Activated CD4-positive, alpha-beta T cell treated with anti-CD3 and anti-CD28 coated beads for 36 hours (primary cell): ENCODE measurements at regions of chr3 and their contacts with region 1.

Region 1: DNA sequence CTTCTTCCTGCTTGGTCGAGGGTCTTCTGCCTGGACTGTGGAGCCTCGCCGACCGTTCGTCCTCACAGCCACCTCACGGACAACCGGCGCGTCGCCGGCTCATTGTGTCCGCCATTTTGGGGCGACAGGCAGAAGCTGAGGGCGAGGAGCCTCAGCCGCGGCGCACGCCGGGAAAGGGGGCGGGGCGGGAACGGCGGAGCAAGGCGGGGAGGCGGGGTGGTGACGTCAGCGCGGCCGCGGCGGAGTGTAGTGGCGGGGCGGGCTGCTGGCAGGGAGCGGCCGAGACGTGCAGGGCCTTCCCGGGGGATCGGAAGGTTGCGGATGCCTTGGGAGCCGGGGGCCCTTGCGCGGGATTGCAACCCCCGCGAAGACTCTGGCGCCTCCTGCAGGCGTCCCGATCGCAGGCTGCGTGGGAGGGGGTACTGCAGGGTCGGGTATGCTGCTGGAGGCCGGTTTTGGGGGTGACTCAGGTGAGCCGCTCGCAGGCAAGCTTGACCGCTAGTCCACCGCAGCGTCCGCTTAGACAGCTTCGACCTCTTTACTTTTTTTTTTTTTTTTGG is at the start of gene WDR82:
- DNase-seq: peak; percentile 100
- ATAC-seq: peak; percentile 78
- H3K4me3 Mint-ChIP-seq: peak within 1 kb of the TSS; percentile 99
- H3K27ac Mint-ChIP-seq: peak within 1 kb of the TSS; percentile 99
- H3K4me1 Mint-ChIP-seq: peaks cover 56% of the 10 kb centered on the region
- H3K27me3 Mint-ChIP-seq: no peaks in the 10 kb centered on the region
- total RNA-seq, gene WDR82: 95.2 to 113 TPM

Region 2: DNA sequence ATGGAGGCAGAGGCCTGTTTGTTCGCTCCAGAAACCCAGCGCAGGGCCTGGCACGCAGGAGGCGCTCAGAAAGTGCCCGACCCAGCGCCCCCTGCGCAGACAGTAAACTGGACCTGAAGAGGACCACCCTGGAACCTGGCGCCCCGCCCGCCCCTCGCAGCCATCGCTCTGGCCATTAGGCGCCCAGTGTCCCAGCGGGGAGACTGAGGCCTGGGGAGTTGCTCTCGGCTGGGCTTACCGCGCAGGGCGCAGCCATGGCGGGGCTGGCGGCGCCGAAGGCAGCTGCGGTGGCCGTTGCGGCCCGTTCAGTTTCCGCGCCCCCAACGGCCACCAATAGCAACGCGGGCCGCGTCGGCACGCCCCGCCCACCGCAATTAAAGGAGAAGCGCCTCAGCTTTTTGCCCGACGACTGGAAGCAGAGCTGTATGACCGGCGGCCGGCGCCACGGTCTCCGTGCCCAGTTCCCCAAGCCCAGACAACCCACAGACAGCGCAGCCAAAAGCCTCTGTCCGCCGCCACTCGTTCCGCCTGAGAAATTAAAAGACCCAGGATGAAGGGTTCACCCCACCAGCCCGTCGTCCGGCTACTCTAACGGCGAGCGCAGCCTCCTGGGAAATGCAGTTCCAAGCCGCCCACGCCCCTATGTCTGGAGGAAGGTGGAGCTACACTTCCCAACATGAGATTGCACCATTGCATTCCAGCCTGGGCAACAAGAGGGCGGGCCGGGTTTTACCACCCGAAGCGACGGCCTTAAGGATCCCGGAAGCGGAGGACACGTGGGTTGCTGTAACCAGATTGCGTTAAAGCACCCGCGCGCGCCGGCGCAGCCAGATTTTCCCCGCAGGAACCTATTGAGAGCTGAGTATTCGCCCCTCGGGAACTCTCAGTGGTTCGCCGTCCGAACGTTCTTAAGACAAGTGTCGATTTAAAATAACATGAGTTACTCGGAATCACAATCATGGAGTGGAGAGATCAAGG is 124.2 kb before region 1 on chr3 and contains the start of gene POC1A:
- CTCF ChIA-PET with region 1: interaction called, 3 read pairs
- POLR2A ChIA-PET with region 1: no interaction called
- intact Hi-C with region 1: loop called (anchors 2 to 5 kb)
- DNase-seq: peak; percentile 95
- ATAC-seq: peak; percentile 89
- H3K4me3 Mint-ChIP-seq: peak within 1 kb of the TSS; percentile 80
- H3K27ac Mint-ChIP-seq: peak within 1 kb of the TSS; percentile 93
- H3K4me1 Mint-ChIP-seq: peaks cover 19% of the 10 kb centered on the region
- H3K27me3 Mint-ChIP-seq: no peaks in the 10 kb centered on the region
- total RNA-seq, gene POC1A: 23.4 to 26.1 TPM

Region 3: DNA sequence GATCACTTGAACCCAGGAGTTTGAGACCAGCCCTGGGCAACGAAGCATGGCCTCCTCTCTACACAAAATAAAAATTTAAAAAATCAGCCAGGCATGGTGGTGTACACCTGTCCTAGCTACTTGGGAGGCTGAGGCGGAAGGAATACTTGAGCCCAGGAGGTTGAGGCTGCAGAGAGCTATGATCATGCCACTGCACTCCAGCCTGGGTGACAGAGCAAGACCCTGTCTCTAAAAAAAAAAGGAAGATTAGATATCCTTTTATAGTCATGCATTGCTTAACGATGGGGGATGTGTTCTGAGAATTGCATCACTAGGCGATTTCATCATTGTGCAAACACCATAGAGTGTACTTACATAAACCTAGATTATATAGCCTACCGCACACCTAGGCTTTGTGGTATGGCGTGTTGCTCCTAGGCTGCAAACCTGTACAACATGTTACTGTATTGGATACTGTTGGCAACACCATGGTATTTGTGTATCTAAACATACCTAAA is 68.0 kb before region 1 on chr3:
- CTCF ChIA-PET with region 1: no interaction called
- POLR2A ChIA-PET with region 1: no interaction called
- intact Hi-C with region 1: no loop called
- DNase-seq: no peak
- ATAC-seq: no peak
- H3K4me3 Mint-ChIP-seq: no peak overlapping the region
- H3K27ac Mint-ChIP-seq: no peak overlapping the region
- H3K4me1 Mint-ChIP-seq: no peaks in the 10 kb centered on the region
- H3K27me3 Mint-ChIP-seq: no peaks in the 10 kb centered on the region

Region 4: DNA sequence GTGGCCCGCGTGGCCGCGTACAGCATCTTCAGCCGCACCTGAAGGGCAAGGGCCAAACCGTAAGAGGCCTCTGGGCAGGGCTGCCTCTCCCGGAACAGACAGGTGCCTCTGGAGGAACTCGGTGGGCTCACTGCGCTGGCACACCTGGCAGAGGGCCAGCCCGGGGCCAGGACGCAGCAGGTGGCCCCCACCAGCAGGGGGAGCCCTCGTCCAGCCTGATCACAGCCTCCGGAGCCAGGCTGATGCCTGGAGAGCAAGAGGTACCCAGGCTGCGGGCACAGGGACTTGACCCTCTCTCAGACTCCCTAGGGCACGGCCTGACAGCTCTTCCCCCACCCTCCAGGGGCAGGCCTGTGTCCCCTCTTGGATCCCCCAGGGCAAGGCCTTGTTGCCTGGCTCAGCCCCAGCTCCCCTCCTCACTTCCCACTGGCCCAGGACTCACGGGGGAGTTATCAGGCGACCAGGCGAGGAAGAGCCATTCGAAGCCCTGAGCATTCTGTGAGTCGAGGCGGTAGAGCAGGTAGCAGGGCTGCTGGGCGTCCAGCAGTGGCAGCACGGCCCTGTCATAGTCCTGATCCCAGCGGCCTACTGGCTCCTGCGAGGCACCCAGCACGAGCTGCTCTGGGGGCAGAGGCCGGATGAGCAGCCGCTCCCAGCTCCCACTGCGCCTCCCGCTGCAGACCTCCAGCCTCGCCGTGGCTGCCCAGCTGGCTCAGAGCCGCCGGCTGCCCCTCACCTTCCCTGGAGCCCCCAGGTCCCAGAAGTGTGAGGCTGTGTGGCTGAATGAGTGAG is 46.9 kb before region 1 on chr3:
- CTCF ChIA-PET with region 1: interaction called, 23 read pairs
- POLR2A ChIA-PET with region 1: no interaction called
- intact Hi-C with region 1: no loop called
- DNase-seq: peak; percentile 89
- ATAC-seq: peak; percentile 66
- H3K4me3 Mint-ChIP-seq: no peak overlapping the region
- H3K27ac Mint-ChIP-seq: peak overlapping the region; percentile 63
- H3K4me1 Mint-ChIP-seq: peaks cover 44% of the 10 kb centered on the region
- H3K27me3 Mint-ChIP-seq: no peaks in the 10 kb centered on the region

Region 5: GRCh38 chr3:52253314-52254304 is 25.0 kb before region 1 on chr3:
- CTCF ChIA-PET with region 1: interaction called, 23 read pairs
- POLR2A ChIA-PET with region 1: interaction called, 19 read pairs
- intact Hi-C with region 1: loop called (anchors 1 kb)
- DNase-seq: peak; percentile 92
- ATAC-seq: peak; percentile 89
- H3K4me3 Mint-ChIP-seq: peak overlapping the region; percentile 64
- H3K27ac Mint-ChIP-seq: peak overlapping the region; percentile 99
- H3K4me1 Mint-ChIP-seq: peaks cover 82% of the 10 kb centered on the region
- H3K27me3 Mint-ChIP-seq: no peaks in the 10 kb centered on the region

Region 6: DNA sequence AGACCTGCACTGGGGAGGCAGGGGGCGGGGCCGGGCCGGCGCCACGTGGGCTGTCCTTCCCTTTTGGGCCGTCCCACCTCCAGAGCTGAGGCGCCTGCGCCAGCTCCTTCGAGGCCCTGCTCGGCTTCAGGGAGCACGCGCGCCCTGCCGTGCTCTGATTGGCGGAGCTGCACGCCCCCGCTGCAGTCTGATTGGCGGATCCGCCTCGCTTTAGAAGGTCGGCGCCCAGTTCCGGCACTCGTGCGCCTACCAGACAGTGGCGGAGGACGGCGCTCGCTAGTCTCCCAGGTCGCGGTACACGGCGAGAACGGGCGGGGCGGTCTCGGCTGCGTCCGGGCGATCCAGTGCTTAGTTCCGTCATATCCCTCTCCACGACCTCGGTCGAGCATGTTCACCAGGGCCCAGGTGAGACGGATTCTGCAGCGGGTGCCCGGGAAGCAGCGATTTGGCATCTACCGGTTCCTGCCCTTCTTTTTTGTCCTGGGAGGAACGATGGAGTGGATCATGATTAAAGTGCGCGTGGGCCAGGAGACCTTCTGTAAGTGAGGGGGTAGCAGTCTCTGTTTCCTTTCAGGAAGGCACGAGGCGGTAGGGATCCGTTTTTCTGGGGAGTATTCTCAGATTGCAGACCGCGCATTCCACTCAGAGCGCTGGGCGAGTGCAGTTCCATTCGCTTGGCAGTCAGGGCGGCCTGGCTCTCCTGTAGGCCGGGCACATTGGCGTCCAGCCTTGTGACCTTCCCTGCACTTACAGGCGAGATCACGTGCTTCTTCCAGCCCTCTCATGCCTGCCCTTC is 258.0 kb after region 1 on chr3 and contains the start of gene UQCC5:
- CTCF ChIA-PET with region 1: no interaction called
- POLR2A ChIA-PET with region 1: no interaction called
- intact Hi-C with region 1: loop called in 1 of 2 experiments (anchors 5 kb)
- DNase-seq: peak; percentile 99
- ATAC-seq: peak; percentile 91
- H3K4me3 Mint-ChIP-seq: peak within 1 kb of the TSS; percentile 100
- H3K27ac Mint-ChIP-seq: peak within 1 kb of the TSS; percentile 99
- H3K4me1 Mint-ChIP-seq: peaks cover 49% of the 10 kb centered on the region
- H3K27me3 Mint-ChIP-seq: no peaks in the 10 kb centered on the region
- total RNA-seq, gene UQCC5: 12.0 to 12.7 TPM